Heart right ventricle (tissue), 16 donors: ENCODE measurements at regions of chrX and their contacts with region 1.

Region 1: GRCh38 chrX:107731831-107732502 is 43.6 kb downstream of the TSC22D3 start:
- DNase-seq: peak; percentile 87 to 90
- ATAC-seq: peak; percentile 73 to 91 (median 86)
- H3K4me3 ChIP-seq: no peak overlapping the region
- H3K27ac ChIP-seq: peak overlapping the region; percentile 31 to 82 (median 70)
- H3K4me1 ChIP-seq: peaks cover 10 to 97% (median 62%) of the 10 kb centered on the region in 9 donors
- H3K27me3 ChIP-seq: peaks cover 0 to 18% (median 0%) of the 10 kb centered on the region in 7 donors
- CTCF ChIP-seq: no peak

Region 2: GRCh38 chrX:107755721-107756120 is 23.8 kb after region 1 on chrX:
- intact Hi-C with region 1: loop called in 1 of 10 experiments (anchors 1 kb)
- DNase-seq: no peak
- ATAC-seq: peak; percentile 61 to 89 (median 84)
- H3K4me3 ChIP-seq: no peak overlapping the region
- H3K27ac ChIP-seq: peak overlapping the region; percentile 0 to 85 (median 70)
- H3K4me1 ChIP-seq: peaks cover 0 to 64% (median 36%) of the 10 kb centered on the region in 9 donors
- H3K27me3 ChIP-seq: peaks cover 0 to 29% (median 0%) of the 10 kb centered on the region in 7 donors
- CTCF ChIP-seq: no peak

Region 3: GRCh38 chrX:107766470-107767150 is 34.6 kb after region 1 on chrX:
- intact Hi-C with region 1: loop called in 4 of 10 experiments (anchors 5 to 10 kb)
- DNase-seq: peak in 1 of 2 donors; percentile 31
- ATAC-seq: peak; percentile 78 to 95 (median 88)
- H3K4me3 ChIP-seq: no peak overlapping the region
- H3K27ac ChIP-seq: peak overlapping the region in 5 of 10 donors; percentile 10 to 58 (median 28)
- H3K4me1 ChIP-seq: peaks cover 0 to 28% (median 0%) of the 10 kb centered on the region in 9 donors
- H3K27me3 ChIP-seq: peaks cover 0 to 45% (median 0%) of the 10 kb centered on the region in 7 donors
- CTCF ChIP-seq: no peak